Upper lobe of right lung (tissue), 1 donor: ENCODE measurements at regions of chr4 and their contacts with region 1.

Region 1: GRCh38 chr4:185597532-185598188 is 62.4 kb upstream of the PDLIM3 start:
- DNase-seq: peak; percentile 74
- ATAC-seq: peak; percentile 96
- H3K4me3 ChIP-seq: no peak overlapping the region
- H3K27ac ChIP-seq: no peak overlapping the region
- H3K4me1 ChIP-seq: no peaks in the 10 kb centered on the region
- H3K27me3 ChIP-seq: no peaks in the 10 kb centered on the region
- CTCF ChIP-seq: peak; percentile 99

Region 2: DNA sequence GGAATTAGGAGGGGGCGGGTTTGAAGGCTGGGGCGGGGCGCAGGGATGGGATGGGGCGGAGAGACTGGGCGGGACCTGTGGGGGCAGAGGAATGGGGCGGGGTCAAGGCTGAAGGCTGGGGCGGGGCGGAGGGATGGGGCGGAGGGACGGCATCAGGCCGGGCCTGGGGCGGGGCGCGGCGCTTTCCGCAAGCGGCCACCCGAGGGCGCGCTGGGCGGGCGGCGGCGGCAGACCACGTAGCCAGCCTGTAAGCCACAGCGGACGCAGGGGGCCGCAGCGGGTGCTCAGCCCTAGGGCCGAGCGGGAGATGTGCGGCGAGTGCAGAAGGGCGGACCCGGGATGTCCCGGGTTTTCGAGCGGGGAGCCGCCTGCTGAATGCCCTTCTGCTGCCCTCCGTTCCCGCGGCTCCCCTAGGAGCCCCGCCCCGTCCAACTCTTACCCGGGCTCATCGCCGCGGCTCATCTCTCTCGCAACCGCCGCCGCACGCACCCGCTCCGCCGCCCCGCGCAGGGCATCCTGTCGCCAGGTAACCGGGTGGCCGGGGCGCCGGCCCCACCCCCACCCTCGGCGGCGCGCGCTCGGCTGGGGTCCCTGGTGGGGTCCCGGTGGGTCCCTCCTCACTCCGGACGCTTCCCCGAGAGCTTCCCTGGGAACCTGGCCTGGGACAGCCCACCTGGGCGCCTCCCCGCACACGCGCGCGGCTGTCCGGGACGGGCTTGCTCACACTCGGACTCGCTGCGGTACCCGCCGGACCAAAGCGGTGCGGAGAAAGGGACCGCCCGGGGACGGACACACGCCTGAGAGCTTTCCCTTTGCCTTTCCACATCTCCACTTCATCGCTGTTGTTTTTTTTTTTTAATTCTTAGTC is 126.2 kb before region 1 on chr4 and contains the start of gene CCDC110:
- intact Hi-C with region 1: loop called (anchors 10 kb)
- DNase-seq: peak; percentile 96
- ATAC-seq: peak; percentile 99
- H3K4me3 ChIP-seq: peak within 1 kb of the TSS; percentile 67
- H3K27ac ChIP-seq: peak within 1 kb of the TSS; percentile 61
- H3K4me1 ChIP-seq: peaks cover 9% of the 10 kb centered on the region
- H3K27me3 ChIP-seq: no peaks in the 10 kb centered on the region
- CTCF ChIP-seq: peak; percentile 64
- total RNA-seq, gene CCDC110: 0.75 TPM

Region 3: GRCh38 chr4:185839194-185839712 is 241.6 kb after region 1 on chr4:
- intact Hi-C with region 1: no loop called
- DNase-seq: no peak
- ATAC-seq: peak; percentile 53
- H3K4me3 ChIP-seq: no peak overlapping the region
- H3K27ac ChIP-seq: peak overlapping the region; percentile 39
- H3K4me1 ChIP-seq: peaks cover 10% of the 10 kb centered on the region
- H3K27me3 ChIP-seq: no peaks in the 10 kb centered on the region
- CTCF ChIP-seq: no peak